Activated CD4-positive, alpha-beta memory T cell treated with anti-CD3 and anti-CD28 coated beads for 36 hours (primary cell): ENCODE measurements at regions of chr16 and their contacts with region 1.

Region 1: DNA sequence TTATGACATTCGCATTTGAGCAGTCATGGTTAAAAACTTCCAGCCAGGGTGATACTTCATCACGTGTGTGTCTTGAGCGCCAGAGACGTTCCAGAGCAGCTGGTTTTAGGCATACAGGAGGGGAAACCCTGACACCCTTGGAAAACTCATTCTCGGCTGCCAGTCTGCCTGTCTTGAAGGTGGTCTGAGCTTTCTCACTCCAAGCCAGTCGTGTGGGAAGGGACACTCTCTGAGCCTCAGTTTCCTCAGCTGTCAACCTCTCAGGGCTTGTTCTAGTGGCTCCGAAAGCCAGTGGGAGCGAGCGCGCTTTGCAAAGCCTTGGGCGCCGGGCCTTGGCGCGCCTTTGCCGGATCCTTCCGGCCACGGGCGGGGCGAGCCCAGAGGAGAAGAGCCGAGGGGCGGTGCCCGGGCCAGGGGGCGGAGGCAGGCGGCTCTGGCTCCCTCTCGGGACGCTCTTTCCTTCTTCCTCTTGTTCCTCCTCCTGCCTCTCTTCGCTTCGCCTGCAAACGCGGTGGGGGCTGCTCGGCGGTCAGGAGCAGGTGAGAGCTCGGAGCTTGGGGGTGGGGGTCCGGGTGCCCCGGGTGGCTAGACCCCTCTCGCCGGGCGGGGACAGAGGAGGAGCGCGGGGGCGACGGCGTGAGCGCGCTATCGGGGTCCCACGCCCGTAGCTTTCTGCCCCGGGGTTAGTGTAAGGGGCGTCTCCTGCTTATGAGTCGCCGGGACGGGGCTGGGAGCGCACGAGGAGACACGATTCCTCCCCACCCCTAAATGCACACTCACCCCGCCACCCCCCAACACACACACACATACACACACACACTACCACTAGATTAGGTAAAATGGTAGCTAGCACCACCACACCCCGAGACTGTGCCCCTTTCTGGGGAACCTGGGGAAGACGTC is at the start of gene LDAF1:
- DNase-seq: peak; percentile 86
- H3K4me3 Mint-ChIP-seq: peak within 1 kb of the TSS; percentile 77
- H3K27ac Mint-ChIP-seq: peak within 1 kb of the TSS; percentile 5
- H3K4me1 Mint-ChIP-seq: peaks cover 24% of the 10 kb centered on the region
- H3K27me3 Mint-ChIP-seq: no peaks in the 10 kb centered on the region
- total RNA-seq, gene LDAF1: 13.9 to 15.1 TPM

Region 2: DNA sequence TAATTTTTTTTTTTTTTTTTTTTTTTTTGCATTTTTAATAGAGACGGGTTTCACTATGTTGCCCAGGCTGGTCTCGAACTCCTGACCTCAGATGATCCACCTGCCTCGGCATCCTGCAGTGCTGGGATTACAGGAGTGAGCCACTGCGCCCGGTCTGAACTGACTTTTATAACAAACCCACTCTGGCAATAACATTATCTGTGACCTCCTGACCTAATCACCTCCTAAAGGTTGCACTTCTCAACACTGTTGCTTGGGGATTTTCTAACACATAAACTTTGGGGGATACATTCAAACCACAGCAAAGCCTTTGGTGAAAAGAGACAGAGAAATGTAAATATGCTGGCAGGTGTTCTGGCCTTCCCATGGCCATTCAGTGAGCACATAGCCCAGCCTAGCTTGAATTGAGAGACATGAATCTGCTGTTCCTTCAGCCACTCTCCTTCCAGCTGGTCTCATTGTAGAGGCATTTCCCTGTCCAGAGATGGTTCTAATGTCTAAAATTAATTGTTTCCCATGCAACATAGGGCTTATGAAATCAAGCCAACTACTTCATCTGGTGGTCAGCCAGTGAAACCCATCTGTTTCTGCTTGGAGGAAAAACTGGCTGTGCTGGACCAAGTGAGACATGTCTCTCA is 229.6 kb before region 1 on chr16:
- CTCF ChIA-PET with region 1: no interaction called
- POLR2A ChIA-PET with region 1: no interaction called
- intact Hi-C with region 1: no loop called
- DNase-seq: no peak
- H3K4me3 Mint-ChIP-seq: no peak overlapping the region
- H3K27ac Mint-ChIP-seq: no peak overlapping the region
- H3K4me1 Mint-ChIP-seq: no peaks in the 10 kb centered on the region
- H3K27me3 Mint-ChIP-seq: no peaks in the 10 kb centered on the region

Region 3: DNA sequence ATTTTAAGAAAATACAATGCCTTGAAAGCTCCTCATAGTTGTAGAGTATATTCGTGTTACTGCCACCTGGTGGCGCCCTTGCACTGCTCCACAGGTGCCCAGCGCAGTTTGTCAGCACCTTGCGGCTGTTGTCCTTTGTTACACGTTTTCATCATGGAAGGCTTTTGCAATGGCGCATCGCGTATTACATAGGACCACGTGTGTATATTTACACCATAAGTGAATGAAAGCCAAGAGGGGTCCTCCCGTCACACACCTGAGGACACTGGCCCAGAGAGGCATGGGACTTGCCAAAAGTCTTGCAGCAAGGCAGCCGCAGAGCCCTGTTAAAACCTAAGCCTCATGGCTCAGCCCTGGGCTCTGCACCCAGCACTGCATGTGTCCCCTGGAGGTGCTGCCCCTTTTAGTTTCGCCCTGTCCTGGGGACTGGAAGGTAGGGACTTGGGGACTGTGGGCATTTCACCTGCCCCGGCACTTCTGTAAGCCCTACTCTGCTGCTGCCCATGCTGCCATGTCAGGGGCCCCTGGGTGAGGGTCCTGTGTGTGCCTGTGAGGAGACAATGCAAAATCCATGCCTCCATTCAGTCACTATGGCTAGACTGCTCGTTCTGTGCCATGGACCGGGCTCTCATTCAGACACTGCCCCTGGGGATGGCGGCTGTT is 1163.0 kb after region 1 on chr16:
- CTCF ChIA-PET with region 1: interaction called, 3 read pairs
- POLR2A ChIA-PET with region 1: no interaction called
- intact Hi-C with region 1: loop called (anchors 10 kb)
- DNase-seq: peak; percentile 82
- H3K4me3 Mint-ChIP-seq: no peak overlapping the region
- H3K27ac Mint-ChIP-seq: peak overlapping the region; percentile 38
- H3K4me1 Mint-ChIP-seq: peaks cover 9% of the 10 kb centered on the region
- H3K27me3 Mint-ChIP-seq: no peaks in the 10 kb centered on the region